Caki2 (cell line): ENCODE measurements at regions of chr3 and their contacts with region 1.

Region 1: GRCh38 chr3:190120269-190121060 is at the start of gene P3H2:
- DNase-seq: peak; percentile 90
- total RNA-seq, gene P3H2: 152 and 185 TPM in 2 replicates

Region 2: GRCh38 chr3:190197346-190197763 is 76.9 kb after region 1 on chr3:
- in situ Hi-C with region 1: no loop called
- DNase-seq: peak; percentile 98

Region 3: DNA sequence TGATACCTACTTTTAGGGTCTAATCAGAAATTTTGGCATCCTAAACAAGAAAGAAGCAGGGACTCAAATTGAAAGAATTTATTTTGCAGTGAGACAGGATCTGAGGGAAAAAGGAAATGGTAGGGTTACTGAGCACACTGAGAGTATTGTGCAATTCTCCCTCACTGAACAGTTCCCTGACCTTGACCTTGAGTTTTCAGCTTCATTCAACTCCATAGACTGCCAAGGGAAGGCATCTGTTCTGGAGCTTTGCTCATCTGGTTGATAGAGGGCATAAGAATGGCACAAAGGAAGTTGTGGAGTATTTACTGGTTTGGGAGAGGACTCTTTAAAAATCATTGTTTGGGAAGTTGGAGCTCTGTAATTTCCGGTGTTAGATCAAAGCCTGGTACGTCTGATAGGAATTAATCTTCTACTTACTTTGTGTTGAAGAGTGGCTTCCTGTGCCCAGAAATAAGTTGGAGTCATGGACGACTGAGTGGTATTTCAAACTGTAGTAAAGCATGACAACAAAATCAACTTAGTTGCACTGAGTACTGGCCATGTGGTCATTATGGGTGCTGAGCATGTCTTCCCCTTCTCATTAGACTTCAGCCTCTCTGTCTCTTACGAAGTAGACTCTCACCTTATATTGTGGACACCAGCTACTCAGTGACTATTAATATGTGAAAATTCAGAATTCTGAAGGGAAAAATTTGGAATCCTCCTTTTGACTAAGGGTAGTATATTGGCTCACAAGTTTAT is 161.0 kb after region 1 on chr3:
- in situ Hi-C with region 1: no loop called
- DNase-seq: no peak

Region 4: GRCh38 chr3:190384241-190384863 is 263.9 kb after region 1 on chr3:
- in situ Hi-C with region 1: loop called (anchors 10 kb)
- DNase-seq: peak; percentile 90